ENCODE measurements at regions of chr13 and their contacts with region 1.

Region 1: DNA sequence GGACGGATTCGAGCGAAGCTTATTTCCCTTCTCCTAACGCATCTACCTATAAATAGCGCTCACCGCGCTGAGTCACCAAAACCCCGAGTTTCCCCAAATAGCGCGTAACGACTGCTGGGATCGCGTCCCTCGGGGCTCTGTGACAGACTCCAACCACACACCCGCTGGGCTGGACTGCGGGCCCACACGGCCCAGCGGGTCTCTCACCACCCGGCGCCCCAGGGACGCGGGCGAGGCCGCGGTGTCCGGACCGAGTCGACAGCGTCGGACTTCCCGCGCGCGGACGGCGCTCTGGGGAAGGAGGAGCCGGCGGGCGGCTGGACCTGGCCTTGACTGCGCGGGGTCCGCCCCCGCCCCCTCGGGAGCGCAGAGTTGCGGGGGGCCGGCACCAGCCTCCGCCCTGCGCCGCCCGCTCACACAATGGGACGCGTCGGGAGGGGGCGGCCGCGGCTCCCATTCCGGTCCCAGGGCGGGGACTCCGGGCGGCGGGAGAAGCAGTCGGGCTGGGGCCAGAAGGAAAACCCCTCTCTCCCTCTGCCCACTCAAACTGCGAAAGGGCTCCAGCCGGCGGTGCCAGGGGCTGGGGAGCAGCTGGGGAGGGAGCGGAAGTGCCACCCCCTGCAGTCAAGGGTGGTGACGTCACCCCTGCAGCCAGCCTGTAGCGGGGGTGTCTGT is 108.8 kb downstream of the KCNRG start:
- DNase-seq: peak; percentile 92
- H3K4me3 ChIP-seq: peak overlapping the region; percentile 82 to 96 (median 90)
- H3K27ac ChIP-seq: peak overlapping the region; percentile 96 to 100 (median 99)
- H3K4me1 ChIP-seq: peaks cover 0 to 48% (median 31%) of the 10 kb centered on the region in 4 donors
- H3K27me3 ChIP-seq: peaks cover 11 to 25% (median 17%) of the 10 kb centered on the region in 3 donors
- CTCF ChIP-seq: no peak
- EP300 ChIP-seq: peak in 1 of 4 donors; percentile 15
- POLR2A ChIP-seq: peak; percentile 69 to 79

Region 2: DNA sequence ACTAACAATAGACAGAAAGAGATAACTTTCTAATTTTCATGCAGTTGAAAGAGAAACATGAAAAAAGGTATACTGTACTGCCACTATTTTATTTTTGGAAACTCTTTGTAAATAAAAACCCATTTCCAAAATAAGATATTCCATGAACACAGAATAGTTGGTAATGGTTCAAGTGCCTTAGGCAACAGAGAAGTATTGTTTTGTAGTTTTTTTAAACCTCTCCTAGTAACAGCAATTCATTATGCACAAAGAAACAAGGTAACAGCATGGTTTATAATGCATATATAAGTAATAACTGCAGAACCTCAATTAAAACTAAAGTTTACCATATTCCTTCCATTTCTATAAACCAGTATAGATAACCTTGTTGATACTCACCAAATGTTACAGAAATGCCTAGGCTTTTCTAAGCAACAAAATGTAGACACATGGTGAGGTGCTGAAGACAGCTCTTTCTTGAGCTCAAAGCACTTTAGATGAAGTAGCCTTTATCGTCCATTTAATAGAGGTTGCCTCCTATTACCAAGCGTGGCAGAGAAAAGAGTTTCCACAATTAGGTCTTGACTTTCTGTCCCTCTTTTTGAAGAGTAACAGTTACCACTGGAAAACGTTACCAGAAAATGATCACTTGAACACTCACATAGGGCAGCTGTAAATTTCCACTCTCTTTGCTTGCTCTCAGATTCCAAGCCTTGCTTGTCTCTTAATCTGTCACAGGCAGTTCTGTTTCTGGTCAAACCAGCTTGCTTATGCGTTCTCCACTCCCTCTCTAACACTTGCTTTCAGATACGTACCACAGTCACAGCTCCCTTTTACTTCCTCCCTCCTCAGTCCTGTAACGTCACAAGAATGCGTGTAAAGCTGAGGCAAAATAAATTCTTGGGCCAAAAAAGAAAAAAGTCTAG is 723.0 kb before region 1 on chr13:
- intact Hi-C with region 1: loop called (anchors 10 kb)
- DNase-seq: peak; percentile 80
- H3K4me3 ChIP-seq: peak overlapping the region; percentile 42 to 56 (median 52)
- H3K27ac ChIP-seq: peak overlapping the region; percentile 72 to 89 (median 86)
- H3K4me1 ChIP-seq: peaks cover 0 to 41% (median 26%) of the 10 kb centered on the region in 4 donors
- H3K27me3 ChIP-seq: no peaks in the 10 kb centered on the region
- CTCF ChIP-seq: no peak
- EP300 ChIP-seq: peak; percentile 43 to 76 (median 72)
- POLR2A ChIP-seq: peak in 1 of 2 donors; percentile 57

Region 3: DNA sequence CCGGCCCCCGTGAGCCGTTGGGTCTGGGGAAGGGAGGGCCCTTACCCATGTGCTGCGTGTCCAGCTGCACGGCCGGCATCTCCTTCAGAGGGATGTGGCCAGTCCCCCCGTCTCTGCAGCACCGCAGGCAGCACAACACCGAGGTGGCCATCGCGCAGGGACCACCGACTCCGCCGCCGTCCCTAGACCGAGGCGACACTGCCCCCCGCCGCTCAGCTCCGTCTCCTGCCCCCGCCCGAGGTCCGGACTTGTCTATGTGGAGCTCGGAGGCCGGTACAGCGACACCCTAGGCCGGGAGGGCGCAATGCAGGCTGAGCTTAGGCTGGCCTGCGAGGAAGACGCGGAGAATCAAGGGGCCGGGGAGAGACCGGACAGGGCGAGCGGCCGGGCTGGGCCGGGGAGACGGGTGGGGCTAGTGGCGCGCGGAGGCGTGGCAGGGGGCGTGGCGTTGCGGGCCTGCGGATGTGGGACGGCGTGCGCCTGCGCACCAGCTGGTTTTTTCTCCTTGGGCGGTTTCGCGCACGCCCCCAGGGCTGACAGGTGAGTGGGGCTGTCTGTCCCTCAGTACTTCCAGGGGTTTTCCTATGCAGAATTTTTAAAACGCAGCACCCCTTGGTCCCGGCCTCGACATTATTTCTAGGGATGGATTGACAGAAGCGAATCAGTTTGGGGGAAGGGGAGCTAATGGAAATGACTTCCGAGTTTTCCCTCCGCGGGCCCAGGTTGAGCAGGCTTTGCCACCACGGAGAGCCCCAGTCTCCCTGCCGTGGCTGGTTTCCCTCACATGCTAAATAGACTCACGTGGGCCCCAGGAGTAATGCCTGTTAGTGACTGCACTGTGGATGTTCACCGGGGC is 187.7 kb before region 1 on chr13 and contains the start of gene SPRYD7:
- intact Hi-C with region 1: loop called (anchors 2 kb)
- DNase-seq: peak; percentile 98
- H3K4me3 ChIP-seq: peak within 1 kb of the TSS; percentile 79 to 94 (median 88)
- H3K27ac ChIP-seq: peak within 1 kb of the TSS; percentile 85 to 92 (median 89)
- H3K4me1 ChIP-seq: peaks cover 0 to 30% (median 23%) of the 10 kb centered on the region in 4 donors
- H3K27me3 ChIP-seq: no peaks in the 10 kb centered on the region
- CTCF ChIP-seq: peak; percentile 93 to 97 (median 96)
- EP300 ChIP-seq: no peak
- POLR2A ChIP-seq: peak; percentile 29 to 45
- total RNA-seq, gene SPRYD7: 6.6 to 9.1 (median 8.4) TPM

Region 4: GRCh38 chr13:50081679-50082425 is 42.1 kb before region 1 on chr13:
- intact Hi-C with region 1: loop called (anchors 1 kb)
- DNase-seq: peak; percentile 99
- H3K4me3 ChIP-seq: peak overlapping the region; percentile 75 to 88 (median 79)
- H3K27ac ChIP-seq: peak overlapping the region; percentile 89 to 96 (median 91)
- H3K4me1 ChIP-seq: peaks cover 0 to 59% (median 27%) of the 10 kb centered on the region in 4 donors
- H3K27me3 ChIP-seq: peaks cover 0 to 9% (median 0%) of the 10 kb centered on the region in 3 donors
- CTCF ChIP-seq: no peak
- EP300 ChIP-seq: peak in 2 of 4 donors; percentile 4 to 7
- POLR2A ChIP-seq: peak; percentile 7 to 8

Region 5: GRCh38 chr13:50911937-50912795 is 788.2 kb after region 1 on chr13:
- intact Hi-C with region 1: loop called (anchors 2 kb)
- DNase-seq: peak; percentile 91
- H3K4me3 ChIP-seq: no peak overlapping the region
- H3K27ac ChIP-seq: peak overlapping the region; percentile 55 to 91 (median 87)
- H3K4me1 ChIP-seq: peaks cover 0 to 42% (median 34%) of the 10 kb centered on the region in 4 donors
- H3K27me3 ChIP-seq: no peaks in the 10 kb centered on the region
- CTCF ChIP-seq: peak; percentile 54 to 81 (median 70)
- EP300 ChIP-seq: no peak
- POLR2A ChIP-seq: no peak

Region 6: GRCh38 chr13:51297556-51297955 is 1173.6 kb after region 1 on chr13:
- intact Hi-C with region 1: no loop called
- DNase-seq: no peak
- H3K4me3 ChIP-seq: no peak overlapping the region
- H3K27ac ChIP-seq: no peak overlapping the region
- H3K4me1 ChIP-seq: peaks cover 0 to 4% (median 3%) of the 10 kb centered on the region in 4 donors
- H3K27me3 ChIP-seq: no peaks in the 10 kb centered on the region
- CTCF ChIP-seq: no peak
- EP300 ChIP-seq: no peak
- POLR2A ChIP-seq: no peak